CD8-positive, alpha-beta memory T cell (primary cell): ENCODE measurements at regions of chr19 and their contacts with region 1.

Region 1: GRCh38 chr19:41298348-41298964 is 11.5 kb upstream of the CCDC97 start:
- DNase-seq: peak; percentile 45 to 78 (median 56)
- H3K4me3 ChIP-seq: no peak overlapping the region
- H3K4me3 Mint-ChIP-seq: peak overlapping the region; percentile 37 to 67 (median 64)
- H3K27ac ChIP-seq: peak overlapping the region; percentile 68
- H3K27ac Mint-ChIP-seq: peak overlapping the region; percentile 96 to 100 (median 98)
- H3K4me1 ChIP-seq: peaks cover 77% of the 10 kb centered on the region
- H3K4me1 Mint-ChIP-seq: peaks cover 80 to 93% (median 90%) of the 10 kb centered on the region in 3 donors
- H3K27me3 ChIP-seq: no peaks in the 10 kb centered on the region
- H3K27me3 Mint-ChIP-seq: no peaks in the 10 kb centered on the region

Region 2: DNA sequence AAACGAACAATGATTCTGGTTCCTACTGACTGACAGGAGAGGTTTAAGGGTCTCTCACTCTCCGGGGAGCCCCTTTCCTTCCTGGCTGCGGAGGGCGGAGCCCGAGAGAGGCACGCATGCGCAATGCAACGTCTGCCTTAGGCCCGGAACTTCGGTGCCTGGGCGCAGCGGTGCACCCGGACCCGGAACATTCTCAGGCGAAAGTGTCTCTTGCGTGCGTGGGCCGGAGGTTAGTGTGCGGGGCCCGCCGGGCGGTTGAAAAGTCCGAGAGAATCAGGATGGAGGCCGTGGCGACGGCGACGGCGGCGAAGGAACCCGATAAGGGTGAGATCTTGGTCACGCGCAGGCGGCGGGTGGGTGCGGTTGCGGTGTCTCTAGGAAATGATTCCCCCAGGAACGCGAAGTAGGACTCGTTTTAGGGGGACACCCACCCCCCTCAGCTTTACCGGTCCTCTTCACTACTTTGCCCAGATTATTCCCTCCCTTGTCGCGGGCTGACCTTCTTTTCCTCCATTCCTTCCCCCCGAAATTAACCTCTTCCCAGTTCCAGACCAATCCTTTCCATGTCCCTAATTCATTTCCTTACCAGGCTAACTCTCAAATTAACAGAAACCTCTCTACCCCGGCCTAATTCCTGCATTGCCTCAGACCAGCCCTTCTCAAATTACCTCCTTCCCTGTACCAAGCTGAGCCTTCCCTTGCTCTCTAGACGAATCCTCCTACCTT is 11.7 kb after region 1 on chr19 and contains the start of gene CCDC97:
- CTCF ChIA-PET with region 1: interaction called, 24 read pairs
- POLR2A ChIA-PET with region 1: interaction called, 3 read pairs
- DNase-seq: peak; percentile 81 to 94 (median 89)
- H3K4me3 ChIP-seq: peak within 1 kb of the TSS; percentile 93
- H3K4me3 Mint-ChIP-seq: peak within 1 kb of the TSS; percentile 94 to 100 (median 98)
- H3K27ac ChIP-seq: peak within 1 kb of the TSS; percentile 90
- H3K27ac Mint-ChIP-seq: peak within 1 kb of the TSS; percentile 93 to 100 (median 98)
- H3K4me1 ChIP-seq: peaks cover 60% of the 10 kb centered on the region
- H3K4me1 Mint-ChIP-seq: peaks cover 68 to 93% (median 87%) of the 10 kb centered on the region in 3 donors
- H3K27me3 ChIP-seq: no peaks in the 10 kb centered on the region
- H3K27me3 Mint-ChIP-seq: peaks cover 0 to 8% of the 10 kb centered on the region in 2 donors
- total RNA-seq, gene CCDC97: 31.7 to 32.1 TPM

Region 3: DNA sequence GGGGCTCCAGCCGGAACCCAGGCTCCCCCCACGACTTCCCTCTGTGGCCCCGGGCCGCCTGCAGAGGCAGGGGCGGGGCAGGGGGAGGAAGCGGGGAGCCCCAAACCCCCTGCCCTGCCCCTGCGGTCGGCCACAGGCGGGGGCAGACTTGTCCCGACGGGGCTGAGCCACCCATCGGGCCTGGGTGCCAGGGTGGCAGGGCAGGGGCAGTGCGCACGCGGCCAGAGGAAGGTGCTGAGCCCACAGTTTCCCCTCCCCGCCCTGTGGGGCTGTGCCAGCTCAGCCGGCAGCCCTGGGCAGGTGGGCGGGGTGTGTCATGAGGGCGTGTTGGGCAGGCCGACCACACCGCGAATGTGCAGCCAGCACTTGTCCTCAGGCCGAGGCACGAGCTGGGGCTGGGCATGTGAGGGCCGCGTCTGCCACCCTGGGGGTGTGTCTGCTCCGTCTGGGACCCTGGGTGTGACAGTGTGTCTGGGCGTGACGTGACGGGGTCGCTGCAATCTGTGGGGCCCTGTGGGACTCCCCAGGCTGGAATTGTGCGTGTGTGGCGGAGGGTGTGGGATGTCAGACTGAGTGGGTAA is 29.2 kb after region 1 on chr19:
- CTCF ChIA-PET with region 1: interaction called, 3 read pairs
- POLR2A ChIA-PET with region 1: interaction called, 11 read pairs
- DNase-seq: peak; percentile 81 to 97 (median 92)
- H3K4me3 ChIP-seq: peak overlapping the region; percentile 64
- H3K4me3 Mint-ChIP-seq: peak overlapping the region; percentile 73 to 89 (median 80)
- H3K27ac ChIP-seq: peak overlapping the region; percentile 80
- H3K27ac Mint-ChIP-seq: peak overlapping the region; percentile 97 to 100 (median 100)
- H3K4me1 ChIP-seq: peaks cover 69% of the 10 kb centered on the region
- H3K4me1 Mint-ChIP-seq: peaks cover 68 to 82% (median 70%) of the 10 kb centered on the region in 3 donors
- H3K27me3 ChIP-seq: no peaks in the 10 kb centered on the region
- H3K27me3 Mint-ChIP-seq: peaks cover 0 to 9% of the 10 kb centered on the region in 2 donors